AG04449 (cell line): ENCODE measurements at regions of chr17 and their contacts with region 1.

Region 1: GRCh38 chr17:2054512-2055291 is at the start of gene HIC1:
- DNase-seq: no peak
- H3K4me3 ChIP-seq: peak within 1 kb of the TSS; percentile 66
- CTCF ChIP-seq: peak; percentile 73

Region 2: DNA sequence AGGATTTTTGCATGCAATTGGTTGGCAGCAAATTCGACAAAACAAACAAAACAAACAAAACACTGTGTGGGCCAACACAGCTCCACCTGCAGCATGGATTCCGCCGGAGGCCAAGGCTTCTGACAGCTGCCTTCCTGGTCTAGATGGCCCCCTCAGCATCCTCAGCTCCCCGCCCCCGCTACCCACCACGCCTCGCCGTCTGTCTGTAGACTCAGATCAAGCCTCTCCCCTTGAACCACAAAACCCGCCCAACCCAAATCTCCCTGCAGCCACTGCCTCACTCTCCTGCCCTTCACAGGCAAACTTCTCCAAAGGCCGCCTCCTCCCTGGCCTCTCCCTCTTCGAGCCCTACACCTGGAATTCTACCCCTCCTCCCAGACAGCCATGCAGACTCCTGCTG is 87.5 kb before region 1 on chr17:
- CTCF ChIA-PET with region 1: no interaction called
- POLR2A ChIA-PET with region 1: no interaction called
- DNase-seq: no peak
- H3K4me3 ChIP-seq: no peak overlapping the region
- CTCF ChIP-seq: no peak

Region 3: DNA sequence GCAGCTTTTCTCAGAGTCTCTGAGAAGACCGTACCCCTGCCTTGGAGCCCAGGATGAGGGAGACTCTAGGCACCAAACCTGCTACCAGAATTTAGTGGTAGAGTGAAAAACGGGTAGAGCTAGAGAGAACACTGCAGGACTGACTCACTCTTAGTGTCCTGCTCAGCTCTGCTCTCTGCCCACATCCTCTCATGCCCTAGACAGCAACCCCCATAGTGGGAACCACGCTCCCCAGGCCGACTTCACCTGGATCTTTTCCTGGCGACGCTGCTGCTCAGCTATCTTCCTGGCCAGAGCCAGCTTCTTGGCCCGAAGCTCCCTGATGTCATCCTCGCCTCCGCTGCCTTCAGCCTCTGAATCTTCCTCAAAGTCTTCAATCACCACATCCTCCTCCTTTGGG is 26.9 kb after region 1 on chr17:
- CTCF ChIA-PET with region 1: interaction called, 10 read pairs
- POLR2A ChIA-PET with region 1: interaction called, 12 read pairs
- DNase-seq: no peak
- H3K4me3 ChIP-seq: no peak overlapping the region
- CTCF ChIP-seq: no peak

Region 4: GRCh38 chr17:2094891-2095535 is 40.3 kb after region 1 on chr17:
- CTCF ChIA-PET with region 1: interaction called, 27 read pairs
- POLR2A ChIA-PET with region 1: interaction called, 28 read pairs
- DNase-seq: no peak
- H3K4me3 ChIP-seq: no peak overlapping the region
- CTCF ChIP-seq: peak; percentile 89

Region 5: DNA sequence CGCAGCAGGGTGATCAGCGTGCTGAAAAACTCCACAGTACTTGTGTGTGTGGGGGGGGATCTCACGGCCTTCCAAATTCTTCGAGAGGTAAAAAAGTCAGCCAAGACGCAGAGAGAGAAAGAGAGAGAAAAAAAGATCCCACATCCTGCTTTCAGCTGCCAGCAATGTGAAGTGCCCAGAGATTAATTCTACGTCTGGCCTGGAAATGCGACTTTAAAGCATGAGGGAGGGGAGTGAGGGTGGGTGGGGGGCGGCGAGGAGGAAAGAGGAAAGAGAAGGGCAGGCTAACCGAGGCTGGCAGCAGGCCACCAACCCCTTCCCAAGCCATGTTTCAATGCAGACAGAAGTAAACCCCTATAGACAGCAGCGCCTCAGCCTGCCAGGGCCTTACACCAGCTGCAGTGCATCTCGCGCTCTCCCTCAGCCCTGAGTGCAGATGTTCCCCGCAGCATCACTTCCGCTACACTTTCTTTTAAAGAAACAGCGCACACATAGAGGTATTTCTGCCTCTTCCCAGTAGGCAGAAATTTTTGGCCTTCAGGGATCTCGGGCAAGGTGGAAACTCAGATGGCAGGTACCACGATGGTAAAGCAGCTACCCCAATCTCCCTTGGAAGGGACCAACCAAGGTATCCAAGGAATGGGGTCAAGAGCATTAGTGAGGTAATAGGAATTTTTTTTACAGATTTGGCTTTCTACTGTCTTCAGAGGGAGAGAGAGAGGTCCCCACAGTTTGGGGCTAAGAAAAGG is 161.1 kb after region 1 on chr17:
- CTCF ChIA-PET with region 1: interaction called, 11 read pairs
- POLR2A ChIA-PET with region 1: interaction called, 7 read pairs
- DNase-seq: no peak
- H3K4me3 ChIP-seq: peak overlapping the region; percentile 42
- CTCF ChIP-seq: no peak

Region 6: DNA sequence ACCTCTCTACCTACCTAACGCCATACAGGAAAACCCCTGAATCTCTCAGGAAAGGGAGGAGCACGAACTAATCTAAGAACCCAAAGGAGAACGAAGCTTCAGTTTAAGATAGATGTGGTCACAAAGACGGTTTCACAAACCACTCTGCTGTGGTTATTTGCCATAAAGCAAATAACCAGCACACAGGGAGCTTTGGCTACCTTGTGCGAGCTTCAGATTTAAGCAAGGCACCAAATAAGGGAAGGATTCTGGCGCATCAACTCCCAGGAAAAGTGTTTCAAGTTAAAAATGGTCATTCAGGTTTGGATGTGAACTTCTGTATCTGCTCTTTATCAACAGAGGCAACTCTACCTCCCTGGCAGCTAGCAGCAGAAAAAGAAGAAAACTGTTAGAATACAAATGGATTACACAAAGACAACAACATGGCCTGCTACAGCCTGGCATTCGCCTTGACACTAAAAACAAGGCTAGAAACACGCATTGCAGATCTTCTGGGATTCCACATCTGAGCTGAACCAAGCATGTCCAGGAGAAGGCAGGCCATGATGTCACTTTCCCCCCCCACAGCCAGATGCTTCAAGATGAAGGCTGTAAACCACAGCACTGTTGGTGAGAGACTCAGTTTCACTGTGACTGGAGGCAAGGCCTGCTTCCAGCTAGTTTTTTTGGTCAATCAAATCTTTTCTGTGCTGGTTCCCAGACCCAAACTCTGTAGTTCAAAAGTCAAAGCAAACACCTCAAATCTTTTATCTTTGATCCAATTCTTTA is 205.3 kb after region 1 on chr17:
- CTCF ChIA-PET with region 1: interaction called, 348 read pairs
- POLR2A ChIA-PET with region 1: interaction called, 4 read pairs
- DNase-seq: no peak
- H3K4me3 ChIP-seq: no peak overlapping the region
- CTCF ChIP-seq: no peak

Region 7: GRCh38 chr17:2282297-2282873 is 227.7 kb after region 1 on chr17:
- CTCF ChIA-PET with region 1: interaction called, 123 read pairs
- POLR2A ChIA-PET with region 1: interaction called, 5 read pairs
- DNase-seq: peak; percentile 55
- H3K4me3 ChIP-seq: no peak overlapping the region
- CTCF ChIP-seq: peak; percentile 33